ENCODE measurements at regions of chr14 and their contacts with region 1.

Region 1: GRCh38 chr14:96100161-96101029 is 61.2 kb downstream of the C14orf132 start:
- DNase-seq: peak; percentile 66
- H3K4me3 ChIP-seq: no peak overlapping the region
- H3K27ac ChIP-seq: no peak overlapping the region
- H3K27me3 ChIP-seq: no peaks in the 10 kb centered on the region
- CTCF ChIP-seq: peak; percentile 97

Region 2: DNA sequence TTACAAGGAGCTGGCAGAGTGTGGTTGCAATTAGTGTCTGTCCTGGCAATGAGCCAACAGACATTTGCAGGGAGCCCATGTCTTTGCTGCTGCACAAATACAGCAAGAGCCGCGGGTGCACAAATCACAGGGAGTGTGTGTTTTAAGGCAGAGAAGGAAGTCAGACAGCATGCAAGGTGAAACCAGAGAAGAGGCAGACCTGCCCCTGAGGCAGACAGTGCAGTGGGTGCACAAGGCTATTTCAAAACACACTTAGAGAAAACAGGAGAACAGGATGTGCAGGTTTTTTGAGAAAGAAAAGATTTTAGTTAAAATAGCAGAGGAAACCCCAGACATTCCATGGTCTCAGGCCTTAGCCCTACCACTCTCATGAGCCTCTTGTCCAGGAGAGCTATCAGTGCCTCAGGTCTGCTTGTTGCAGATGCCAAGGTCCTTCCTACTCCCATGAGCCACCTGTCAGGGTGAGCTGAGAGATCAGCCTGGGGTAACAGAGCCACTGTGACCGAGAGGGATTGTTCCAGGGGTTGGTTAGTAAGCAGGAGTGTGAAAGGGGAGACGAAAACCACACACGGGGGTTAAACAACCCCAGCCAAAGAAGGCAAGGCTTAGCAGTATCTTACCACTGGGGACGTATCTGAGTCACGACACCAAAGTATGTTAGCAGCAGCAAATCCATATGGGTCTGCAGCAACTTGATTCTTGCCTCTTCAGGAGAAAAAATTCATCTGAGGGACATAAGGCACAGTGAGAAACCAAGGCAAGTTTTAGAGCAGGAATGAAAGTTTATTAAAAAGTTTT is 16.9 kb after region 1 on chr14:
- CTCF ChIA-PET with region 1: interaction called, 13 read pairs
- POLR2A ChIA-PET with region 1: interaction called, 11 read pairs
- DNase-seq: no peak
- H3K4me3 ChIP-seq: no peak overlapping the region
- H3K27ac ChIP-seq: peak overlapping the region; percentile 47
- H3K27me3 ChIP-seq: no peaks in the 10 kb centered on the region
- CTCF ChIP-seq: peak; percentile 36; the same call in 1 of the 2 replicates

Region 3: GRCh38 chr14:96225745-96226151 is 125.4 kb after region 1 on chr14:
- CTCF ChIA-PET with region 1: interaction called, 15 read pairs
- POLR2A ChIA-PET with region 1: interaction called, 4 read pairs
- DNase-seq: no peak
- H3K4me3 ChIP-seq: no peak overlapping the region
- H3K27ac ChIP-seq: peak overlapping the region; percentile 52
- H3K27me3 ChIP-seq: no peaks in the 10 kb centered on the region
- CTCF ChIP-seq: peak; percentile 46

Region 4: DNA sequence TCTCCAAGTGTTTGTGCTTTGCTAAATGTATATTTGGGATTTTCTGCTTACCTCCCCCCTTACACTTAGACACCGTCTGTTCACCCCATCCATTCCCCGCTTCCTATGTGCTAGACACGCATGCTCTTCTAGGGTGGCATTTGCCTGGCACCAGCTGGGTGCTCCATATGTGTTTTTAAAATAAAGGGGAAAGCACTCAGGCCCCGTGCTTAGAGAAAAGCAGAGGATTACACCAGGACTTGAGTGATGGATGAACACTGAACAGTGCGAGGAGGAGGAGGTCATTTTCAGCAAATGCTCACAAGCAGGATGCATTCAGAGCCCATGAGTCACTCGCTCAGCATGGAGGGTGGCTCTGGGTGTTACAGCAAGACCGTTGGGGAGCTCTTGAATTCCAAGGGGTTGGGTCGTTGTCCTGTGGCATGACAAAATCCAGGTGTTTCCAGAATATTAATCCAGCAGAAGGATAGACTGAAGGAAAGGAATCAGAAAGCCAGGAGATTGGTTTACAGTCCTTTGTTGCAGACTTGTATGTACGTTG is 152.7 kb after region 1 on chr14:
- CTCF ChIA-PET with region 1: interaction called, 30 read pairs
- POLR2A ChIA-PET with region 1: interaction called, 9 read pairs
- DNase-seq: peak; percentile 93
- H3K4me3 ChIP-seq: no peak overlapping the region
- H3K27ac ChIP-seq: peak overlapping the region; percentile 96
- H3K27me3 ChIP-seq: no peaks in the 10 kb centered on the region
- CTCF ChIP-seq: no peak

Region 5: DNA sequence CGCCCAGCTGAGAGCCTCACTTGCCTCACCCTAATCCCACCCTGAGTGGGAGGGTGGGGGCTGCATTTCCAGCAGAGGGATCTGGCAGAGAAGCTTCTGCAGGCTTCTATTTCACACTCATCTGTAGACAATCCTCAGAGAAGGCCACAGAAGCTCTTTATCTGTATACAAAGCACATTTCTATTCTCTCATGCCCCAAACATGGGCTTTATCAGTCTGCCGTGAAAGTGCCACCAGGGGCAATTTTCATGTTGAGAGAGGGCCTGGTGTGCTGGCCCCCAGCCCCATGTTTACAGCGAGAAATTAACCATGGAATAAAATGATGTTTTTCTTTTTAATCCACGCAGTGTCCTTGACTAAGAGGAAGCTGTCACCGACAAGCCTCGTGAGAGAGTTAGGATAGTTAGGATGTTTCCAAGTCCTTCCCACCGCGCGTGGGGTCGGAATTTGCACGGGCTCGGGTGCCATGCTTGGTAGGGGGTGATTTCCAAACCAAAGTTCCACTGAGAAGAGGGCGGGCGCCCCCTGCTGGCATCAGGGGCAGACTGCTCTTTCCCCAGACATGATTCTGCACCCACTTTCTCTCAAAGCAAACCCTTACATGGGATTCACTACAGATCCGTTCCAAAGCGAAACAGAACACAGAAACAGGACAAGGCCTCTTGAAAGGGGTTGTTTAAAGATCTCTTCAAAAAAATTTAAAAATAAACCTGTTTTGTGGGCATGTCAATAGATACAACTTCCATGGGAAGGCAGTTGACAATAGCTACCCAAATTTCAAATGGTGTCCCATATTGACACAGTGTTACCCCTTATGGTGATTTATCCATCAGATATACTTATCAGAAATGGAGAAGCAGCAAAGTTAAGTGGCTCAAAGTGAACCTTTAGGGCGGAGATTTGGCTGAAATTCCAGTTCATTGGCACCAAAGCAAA is 175.1 kb after region 1 on chr14:
- CTCF ChIA-PET with region 1: interaction called, 218 read pairs
- POLR2A ChIA-PET with region 1: interaction called, 6 read pairs
- DNase-seq: peak; percentile 83
- H3K4me3 ChIP-seq: no peak overlapping the region
- H3K27ac ChIP-seq: peak overlapping the region; percentile 97
- H3K27me3 ChIP-seq: no peaks in the 10 kb centered on the region
- CTCF ChIP-seq: peak; percentile 98

Region 6: GRCh38 chr14:96309896-96310330 is 209.5 kb after region 1 on chr14:
- CTCF ChIA-PET with region 1: interaction called, 10 read pairs
- POLR2A ChIA-PET with region 1: no interaction called
- DNase-seq: no peak
- H3K4me3 ChIP-seq: no peak overlapping the region
- H3K27ac ChIP-seq: no peak overlapping the region
- H3K27me3 ChIP-seq: no peaks in the 10 kb centered on the region
- CTCF ChIP-seq: peak; percentile 29